WTC11 (cell line): ENCODE measurements at regions of chr6 and their contacts with region 1.

Region 1: DNA sequence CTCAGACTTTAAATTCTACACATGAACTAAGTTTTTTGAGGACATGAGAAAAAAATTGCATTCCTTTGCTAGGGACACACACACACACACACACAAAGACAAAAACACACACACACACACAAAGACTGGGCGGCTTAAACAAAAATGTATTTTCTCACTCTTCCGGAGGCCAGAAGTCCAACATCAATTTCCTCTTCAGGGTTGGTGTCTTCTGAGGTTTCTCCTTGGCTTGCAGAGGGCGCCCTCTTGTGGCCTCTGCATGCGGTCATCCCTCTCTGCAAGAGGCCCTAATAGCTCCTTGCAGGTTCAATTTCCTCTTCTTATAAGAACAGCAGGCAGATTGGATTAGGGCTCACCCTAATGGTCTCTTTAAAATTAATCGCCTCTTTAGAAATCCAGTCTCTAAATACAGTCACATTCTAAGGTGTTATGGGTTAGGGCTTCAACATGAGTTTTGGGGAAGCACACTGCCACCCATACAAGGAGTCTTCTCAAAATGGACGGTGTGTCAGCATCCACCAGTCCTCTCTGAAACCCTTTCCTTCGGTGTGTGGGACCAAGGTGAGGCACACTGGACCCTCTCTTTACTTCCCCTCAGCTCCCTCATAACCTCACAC is 61.4 kb downstream of the GPR6 start:
- DNase-seq: peak; percentile 89
- ATAC-seq: peak; percentile 80
- H3K4me3 Mint-ChIP-seq: peak overlapping the region; percentile 71
- H3K27ac Mint-ChIP-seq: peak overlapping the region; percentile 91
- H3K4me1 Mint-ChIP-seq: peaks cover 23% of the 10 kb centered on the region
- H3K27me3 Mint-ChIP-seq: no peaks in the 10 kb centered on the region
- CTCF ChIP-seq: peak; percentile 92

Region 2: GRCh38 chr6:109491207-109491938 is 548.1 kb before region 1 on chr6:
- CTCF ChIA-PET with region 1: interaction called, 10 read pairs
- POLR2A ChIA-PET with region 1: no interaction called
- DNase-seq: no peak
- ATAC-seq: peak; percentile 87
- H3K4me3 Mint-ChIP-seq: peak overlapping the region; percentile 26
- H3K27ac Mint-ChIP-seq: peak overlapping the region; percentile 90
- H3K4me1 Mint-ChIP-seq: peaks cover 52% of the 10 kb centered on the region
- H3K27me3 Mint-ChIP-seq: no peaks in the 10 kb centered on the region
- CTCF ChIP-seq: no peak

Region 3: GRCh38 chr6:109713097-109713496 is 326.4 kb before region 1 on chr6:
- CTCF ChIA-PET with region 1: interaction called, 40 read pairs
- POLR2A ChIA-PET with region 1: no interaction called
- DNase-seq: no peak
- ATAC-seq: no peak
- H3K4me3 Mint-ChIP-seq: no peak overlapping the region
- H3K27ac Mint-ChIP-seq: no peak overlapping the region
- H3K4me1 Mint-ChIP-seq: no peaks in the 10 kb centered on the region
- H3K27me3 Mint-ChIP-seq: no peaks in the 10 kb centered on the region
- CTCF ChIP-seq: no peak

Region 4: DNA sequence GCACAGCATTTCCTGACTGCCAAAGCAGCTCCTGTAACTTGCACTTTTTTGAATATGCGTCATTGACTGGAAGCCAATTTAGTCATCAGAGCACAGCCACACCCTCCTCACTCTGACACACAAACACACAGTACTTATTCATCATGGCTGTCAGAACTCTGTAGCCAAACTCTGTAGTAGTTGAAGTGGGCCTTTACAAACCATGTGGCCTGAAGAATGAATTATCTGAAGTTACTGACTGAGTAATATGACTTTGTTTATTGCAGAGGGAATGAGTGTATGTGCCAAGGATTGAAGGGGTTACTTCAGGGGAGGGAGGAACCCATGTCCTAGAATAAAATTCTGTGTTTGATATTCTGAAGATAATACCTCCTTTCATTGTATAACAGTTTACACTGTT is 245.7 kb before region 1 on chr6:
- CTCF ChIA-PET with region 1: interaction called, 28 read pairs
- POLR2A ChIA-PET with region 1: no interaction called
- DNase-seq: no peak
- ATAC-seq: no peak
- H3K4me3 Mint-ChIP-seq: no peak overlapping the region
- H3K27ac Mint-ChIP-seq: no peak overlapping the region
- H3K4me1 Mint-ChIP-seq: peaks cover 39% of the 10 kb centered on the region
- H3K27me3 Mint-ChIP-seq: no peaks in the 10 kb centered on the region
- CTCF ChIP-seq: no peak

Region 5: DNA sequence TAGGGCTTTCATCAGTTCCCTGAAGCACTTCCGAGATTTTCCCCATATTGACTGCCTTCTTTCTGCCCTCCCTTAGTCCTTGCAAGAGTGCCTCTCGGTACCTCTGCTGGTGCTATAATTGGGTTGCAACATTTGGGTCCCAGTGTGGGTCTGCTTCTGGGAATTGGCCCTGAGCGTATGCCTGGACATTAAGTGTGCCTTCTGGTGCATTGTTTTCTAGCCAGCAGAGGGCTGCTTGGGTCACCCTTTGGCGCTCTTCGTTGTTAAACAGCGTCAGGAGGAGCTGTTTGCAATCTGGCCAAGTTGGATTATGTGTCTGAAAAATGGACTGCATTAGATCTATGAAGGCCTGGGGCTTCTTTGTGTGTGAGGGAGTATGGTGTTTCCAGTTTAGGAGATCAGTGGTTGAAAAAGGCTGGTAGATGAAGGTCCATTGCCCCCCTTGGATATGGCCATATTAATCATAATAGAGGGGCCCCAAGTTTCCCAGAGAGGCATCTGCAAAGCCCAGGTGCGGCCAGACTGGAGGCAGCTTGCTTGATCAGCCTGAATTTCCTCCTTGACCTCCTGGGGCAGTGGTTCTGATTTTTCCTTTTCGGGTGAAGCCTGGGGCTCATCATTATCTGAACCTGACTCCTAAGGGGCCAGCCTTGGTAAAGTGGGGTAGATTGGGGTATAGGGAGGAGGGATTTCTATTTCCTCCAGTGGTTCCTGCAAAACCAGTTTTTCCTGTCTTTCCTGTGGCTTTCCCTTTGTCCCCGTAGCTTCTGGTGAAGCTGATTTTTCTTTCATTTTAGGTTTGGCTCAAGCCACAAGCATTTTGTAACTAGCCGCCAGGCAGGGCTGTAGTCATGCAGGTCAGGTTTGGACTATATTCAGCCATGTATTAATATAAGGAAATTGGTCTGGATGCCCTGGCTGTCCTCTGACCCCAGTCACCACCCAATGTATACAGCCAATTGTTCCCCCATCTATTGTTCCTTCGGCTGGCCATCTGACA is 146.7 kb before region 1 on chr6:
- CTCF ChIA-PET with region 1: interaction called, 13 read pairs
- POLR2A ChIA-PET with region 1: no interaction called
- DNase-seq: peak; percentile 20
- ATAC-seq: peak; percentile 74
- H3K4me3 Mint-ChIP-seq: no peak overlapping the region
- H3K27ac Mint-ChIP-seq: peak overlapping the region; percentile 68
- H3K4me1 Mint-ChIP-seq: peaks cover 49% of the 10 kb centered on the region
- H3K27me3 Mint-ChIP-seq: peaks cover 4% of the 10 kb centered on the region
- CTCF ChIP-seq: no peak

Region 6: GRCh38 chr6:109978174-109979032 is 61.1 kb before region 1 on chr6 and contains the start of gene GPR6:
- CTCF ChIA-PET with region 1: interaction called, 25 read pairs
- POLR2A ChIA-PET with region 1: no interaction called
- DNase-seq: peak; percentile 95
- ATAC-seq: peak; percentile 91
- H3K4me3 Mint-ChIP-seq: peak within 1 kb of the TSS; percentile 87
- H3K27ac Mint-ChIP-seq: no peak within 1 kb of the TSS
- H3K4me1 Mint-ChIP-seq: peaks cover 15% of the 10 kb centered on the region
- H3K27me3 Mint-ChIP-seq: peaks cover 64% of the 10 kb centered on the region
- CTCF ChIP-seq: no peak
- total RNA-seq, gene GPR6: 0.22 TPM in 1 of 3 replicates, not detected in the others

Region 7: GRCh38 chr6:110239526-110240274 is 200.2 kb after region 1 on chr6:
- CTCF ChIA-PET with region 1: no interaction called
- POLR2A ChIA-PET with region 1: no interaction called
- DNase-seq: no peak
- ATAC-seq: no peak
- H3K4me3 Mint-ChIP-seq: no peak overlapping the region
- H3K27ac Mint-ChIP-seq: no peak overlapping the region
- H3K4me1 Mint-ChIP-seq: no peaks in the 10 kb centered on the region
- H3K27me3 Mint-ChIP-seq: no peaks in the 10 kb centered on the region
- CTCF ChIP-seq: no peak